ENCODE measurements at regions of chr15 and their contacts with region 1.

Region 1: DNA sequence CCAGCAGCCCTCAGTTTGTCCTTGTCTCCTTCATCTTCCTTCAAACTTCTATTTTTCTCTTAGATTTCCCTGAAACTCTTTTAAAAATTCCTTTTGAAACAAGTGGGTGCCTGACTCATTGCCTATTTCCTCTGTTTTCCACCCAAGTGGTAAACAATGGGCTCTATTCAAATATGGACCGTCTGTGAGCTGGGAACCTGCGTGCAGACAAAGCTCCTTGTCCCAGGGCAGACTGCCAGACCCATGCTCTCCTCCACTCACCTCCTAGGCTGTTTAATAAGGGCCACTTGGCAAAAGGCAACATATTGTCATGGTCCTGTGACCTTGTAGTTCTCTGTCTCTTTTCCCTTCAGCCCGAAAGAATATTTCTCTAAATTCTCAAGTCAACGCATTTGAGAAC is 332.7 kb upstream of the THBS1 start:
- DNase-seq: peak; percentile 84
- H3K4me3 ChIP-seq: no peak overlapping the region
- H3K27ac ChIP-seq: peak overlapping the region; percentile 77
- H3K4me1 ChIP-seq: peaks cover 33% of the 10 kb centered on the region
- H3K27me3 ChIP-seq: no peaks in the 10 kb centered on the region
- CTCF ChIP-seq: no peak

Region 2: GRCh38 chr15:39286706-39287105 is 38.5 kb after region 1 on chr15:
- CTCF ChIA-PET with region 1: no interaction called
- dilution Hi-C with region 1: no loop called
- in situ Hi-C with region 1: no loop called
- intact Hi-C with region 1: no loop called
- DNase-seq: no peak
- H3K4me3 ChIP-seq: no peak overlapping the region
- H3K27ac ChIP-seq: peak overlapping the region; percentile 72
- H3K4me1 ChIP-seq: peaks cover 35% of the 10 kb centered on the region
- H3K27me3 ChIP-seq: no peaks in the 10 kb centered on the region
- CTCF ChIP-seq: no peak

Region 3: DNA sequence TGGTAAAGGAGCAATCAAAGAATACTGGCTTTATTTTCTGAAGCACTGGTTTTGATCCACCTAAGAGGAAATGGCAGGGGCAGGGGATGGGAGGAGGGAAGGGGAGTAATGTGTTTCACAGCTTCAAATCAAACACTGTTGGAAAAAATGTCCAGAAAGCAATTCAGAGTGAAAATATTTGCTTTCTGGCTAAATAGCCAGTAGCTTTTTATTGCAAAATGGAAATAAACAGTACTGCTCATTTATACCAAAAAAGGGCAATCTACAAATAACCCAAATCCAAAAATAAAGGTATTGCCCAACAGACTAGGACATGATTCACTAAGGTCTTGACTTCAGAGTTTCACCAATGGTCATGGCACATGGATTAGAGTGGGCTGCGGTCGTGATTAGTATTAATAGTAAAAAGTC is 53.4 kb after region 1 on chr15:
- CTCF ChIA-PET with region 1: no interaction called
- dilution Hi-C with region 1: loop called (anchors 5 kb)
- in situ Hi-C with region 1: no loop called
- intact Hi-C with region 1: no loop called
- DNase-seq: peak; percentile 20
- H3K4me3 ChIP-seq: no peak overlapping the region
- H3K27ac ChIP-seq: peak overlapping the region; percentile 43
- H3K4me1 ChIP-seq: peaks cover 67% of the 10 kb centered on the region
- H3K27me3 ChIP-seq: no peaks in the 10 kb centered on the region
- CTCF ChIP-seq: no peak

Region 4: DNA sequence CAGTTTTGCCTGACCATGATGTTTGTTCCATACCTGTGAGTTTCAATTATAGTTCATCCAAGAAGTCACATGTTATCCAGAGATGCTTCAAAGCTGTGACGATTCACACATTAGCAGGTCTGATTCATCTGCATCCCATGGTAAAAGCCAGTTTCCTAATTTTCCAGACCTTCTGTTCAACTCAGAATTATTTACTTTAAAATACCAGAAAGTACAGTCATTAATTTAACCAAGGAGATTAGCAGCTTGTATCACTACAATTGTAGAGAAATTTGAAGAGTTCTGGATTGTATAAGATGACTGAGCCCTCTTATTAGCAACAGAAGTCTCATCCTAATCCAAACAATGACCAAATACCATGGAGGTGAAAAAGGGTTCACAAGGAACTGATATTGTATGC is 256.6 kb after region 1 on chr15:
- CTCF ChIA-PET with region 1: no interaction called
- dilution Hi-C with region 1: no loop called
- in situ Hi-C with region 1: no loop called
- intact Hi-C with region 1: no loop called
- DNase-seq: peak; percentile 80
- H3K4me3 ChIP-seq: no peak overlapping the region
- H3K27ac ChIP-seq: no peak overlapping the region
- H3K4me1 ChIP-seq: peaks cover 24% of the 10 kb centered on the region
- H3K27me3 ChIP-seq: no peaks in the 10 kb centered on the region
- CTCF ChIP-seq: no peak

Measured in mammary epithelial cell (primary cell).